ENCODE measurements at regions of chr12 and their contacts with region 1.

Region 1: GRCh38 chr12:100234598-100235304 is 32.1 kb downstream of the DEPDC4 start:
- DNase-seq: peak; percentile 67
- H3K4me3 Mint-ChIP-seq: no peak overlapping the region
- H3K27ac Mint-ChIP-seq: no peak overlapping the region
- H3K4me1 Mint-ChIP-seq: no peaks in the 10 kb centered on the region
- H3K27me3 Mint-ChIP-seq: no peaks in the 10 kb centered on the region

Region 2: DNA sequence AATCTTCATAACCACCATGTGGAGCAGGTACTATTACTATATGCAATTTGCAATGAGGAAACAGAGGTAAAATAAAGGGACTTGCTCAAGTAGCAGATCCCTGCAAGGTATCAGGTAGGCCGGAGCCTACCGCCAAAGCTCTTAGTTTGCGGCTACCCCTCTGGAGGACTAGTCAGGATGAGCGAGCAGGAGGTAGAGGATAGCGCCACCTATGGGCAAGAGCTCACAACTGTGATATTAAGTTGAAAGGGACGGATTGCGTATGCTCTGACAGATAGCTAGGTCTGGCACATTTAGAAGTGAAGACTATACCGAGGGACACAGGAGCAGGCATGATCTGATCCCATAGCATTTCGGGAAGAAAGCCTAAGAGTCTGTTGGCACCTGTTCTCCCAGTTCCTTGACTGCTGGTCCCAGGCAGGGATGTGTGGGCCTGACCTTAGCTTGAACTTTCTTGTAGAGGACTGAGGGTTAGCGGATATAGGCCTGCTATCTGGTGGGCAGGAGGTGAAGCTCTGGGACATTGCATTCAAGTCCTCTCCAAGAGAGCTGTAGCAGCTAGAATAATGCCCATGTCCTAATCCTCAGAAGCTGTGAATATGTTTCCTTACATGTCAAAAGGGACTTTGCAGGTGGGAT is 170.1 kb after region 1 on chr12:
- intact Hi-C with region 1: loop called (anchors 1 kb)
- DNase-seq: peak; percentile 82
- H3K4me3 Mint-ChIP-seq: no peak overlapping the region
- H3K27ac Mint-ChIP-seq: no peak overlapping the region
- H3K4me1 Mint-ChIP-seq: no peaks in the 10 kb centered on the region
- H3K27me3 Mint-ChIP-seq: peaks cover 13% of the 10 kb centered on the region

Region 3: GRCh38 chr12:100554608-100555077 is 319.9 kb after region 1 on chr12:
- intact Hi-C with region 1: loop called (anchors 2 kb)
- DNase-seq: peak; percentile 58
- H3K4me3 Mint-ChIP-seq: no peak overlapping the region
- H3K27ac Mint-ChIP-seq: no peak overlapping the region
- H3K4me1 Mint-ChIP-seq: no peaks in the 10 kb centered on the region
- H3K27me3 Mint-ChIP-seq: peaks cover 5% of the 10 kb centered on the region

Region 4: GRCh38 chr12:100668945-100669536 is 434.3 kb after region 1 on chr12:
- intact Hi-C with region 1: loop called (anchors 2 kb)
- DNase-seq: peak; percentile 85
- H3K4me3 Mint-ChIP-seq: no peak overlapping the region
- H3K27ac Mint-ChIP-seq: no peak overlapping the region
- H3K4me1 Mint-ChIP-seq: no peaks in the 10 kb centered on the region
- H3K27me3 Mint-ChIP-seq: no peaks in the 10 kb centered on the region

Region 5: GRCh38 chr12:100741084-100741711 is 506.4 kb after region 1 on chr12:
- intact Hi-C with region 1: loop called (anchors 2 kb)
- DNase-seq: peak; percentile 59
- H3K4me3 Mint-ChIP-seq: no peak overlapping the region
- H3K27ac Mint-ChIP-seq: no peak overlapping the region
- H3K4me1 Mint-ChIP-seq: no peaks in the 10 kb centered on the region
- H3K27me3 Mint-ChIP-seq: no peaks in the 10 kb centered on the region

Measured in activated CD4-positive, alpha-beta T cell treated with anti-CD3 and anti-CD28 coated beads, Interleukin-2, amount 10 ng/mL, durations not matched to agents 24 days and 14 days (primary cell).